Right cardiac atrium (tissue), 5 donors: ENCODE measurements at regions of chr2 and their contacts with region 1.

Region 1: GRCh38 chr2:240143801-240144648 is 3.6 kb upstream of the OTOS start:
- DNase-seq: peak; percentile 64 to 89 (median 84)
- ATAC-seq: peak; percentile 67 to 80
- H3K4me3 ChIP-seq: no peak overlapping the region
- H3K27ac ChIP-seq: no peak overlapping the region
- H3K4me1 ChIP-seq: no peaks in the 10 kb centered on the region
- H3K27me3 ChIP-seq: no peaks in the 10 kb centered on the region

Region 2: DNA sequence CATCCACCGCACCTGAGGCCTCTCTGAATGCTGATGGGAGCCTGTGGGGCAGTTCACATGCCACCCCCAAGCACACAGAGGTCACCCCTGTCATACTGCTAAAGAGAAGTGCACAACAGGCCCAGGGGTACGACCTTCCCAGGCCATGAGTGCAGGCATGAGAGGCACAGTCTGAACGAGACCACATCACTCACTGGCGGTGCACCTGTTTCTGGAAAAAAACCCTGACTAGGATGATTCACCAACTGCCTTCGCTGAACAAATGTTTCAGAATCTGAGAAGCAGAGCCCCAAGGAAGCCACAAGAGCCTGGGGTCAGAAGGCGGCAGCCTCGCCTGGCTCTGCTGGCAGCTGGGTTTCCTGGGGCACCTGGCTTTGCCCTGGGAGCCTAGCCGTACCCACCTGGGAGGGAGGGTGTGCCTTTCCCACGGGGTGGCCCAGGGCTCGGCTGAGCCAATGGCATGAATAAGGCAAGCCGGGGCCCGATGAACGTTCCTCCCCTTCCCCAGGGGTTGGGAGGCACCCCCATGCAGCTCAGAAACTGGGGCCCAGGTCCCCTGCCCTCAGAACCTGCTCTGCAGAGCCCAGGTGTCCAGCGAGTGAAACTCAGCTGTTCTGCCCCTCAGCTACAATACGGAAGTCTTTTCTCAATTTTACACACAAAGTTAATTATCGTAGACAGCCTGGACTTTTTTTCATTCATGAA is 817.0 kb before region 1 on chr2:
- intact Hi-C with region 1: no loop called
- DNase-seq: peak in 1 of 3 donors; percentile 59
- ATAC-seq: no peak
- H3K4me3 ChIP-seq: no peak overlapping the region
- H3K27ac ChIP-seq: peak overlapping the region; percentile 4
- H3K4me1 ChIP-seq: peaks cover 25% of the 10 kb centered on the region
- H3K27me3 ChIP-seq: no peaks in the 10 kb centered on the region

Region 3: GRCh38 chr2:240060977-240061591 is 82.9 kb before region 1 on chr2:
- intact Hi-C with region 1: loop called (anchors 1 to 5 kb)
- DNase-seq: no peak
- ATAC-seq: peak in 1 of 2 donors; percentile 69
- H3K4me3 ChIP-seq: no peak overlapping the region
- H3K27ac ChIP-seq: no peak overlapping the region
- H3K4me1 ChIP-seq: no peaks in the 10 kb centered on the region
- H3K27me3 ChIP-seq: no peaks in the 10 kb centered on the region